ENCODE measurements at regions of chr18 and their contacts with region 1.

Region 1: DNA sequence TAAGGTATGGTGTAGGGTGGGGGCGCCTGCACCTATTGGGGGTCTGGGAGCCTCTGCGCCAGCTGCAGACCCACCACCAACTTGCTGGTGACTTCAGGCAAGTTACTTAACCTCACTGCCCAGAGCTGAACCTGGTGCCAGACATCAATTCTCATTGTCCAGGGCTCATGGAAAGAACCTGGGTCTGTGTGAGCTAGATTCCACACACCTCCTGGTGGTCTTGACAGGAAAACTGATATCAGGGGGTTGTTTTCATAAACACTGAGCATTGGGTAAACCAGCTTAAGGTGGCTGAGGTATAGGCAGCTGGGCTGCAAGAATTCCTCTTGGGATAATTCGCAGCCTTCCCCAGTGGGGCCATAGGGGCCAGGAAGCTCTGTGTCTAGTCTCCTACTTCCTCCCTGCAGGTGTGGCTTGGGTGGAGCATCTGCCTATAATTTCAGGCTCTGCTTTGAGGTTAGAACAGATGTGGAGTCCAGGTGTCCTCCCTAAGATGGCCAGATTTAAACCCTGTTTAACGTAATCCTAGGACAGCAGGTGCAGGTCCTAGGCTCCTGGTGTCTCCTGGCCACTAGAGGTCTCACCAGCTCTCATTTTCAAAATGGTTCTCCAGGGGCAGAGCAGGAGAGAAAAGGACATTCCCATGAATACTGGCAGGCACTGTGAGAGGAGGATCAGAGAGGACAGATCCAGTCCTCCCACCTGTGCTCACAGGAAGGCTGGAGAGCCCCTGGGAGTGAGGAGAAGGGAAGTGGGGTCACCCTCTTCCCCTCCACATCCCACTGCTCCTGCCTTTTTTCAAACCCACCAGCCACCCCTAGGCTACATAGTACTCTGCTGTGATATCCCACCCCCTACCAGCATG is 100.4 kb upstream of the SMAD2 start:
- DNase-seq: peak; percentile 84
- H3K4me3 ChIP-seq: peak overlapping the region in 1 of 2 experiments; percentile 27; a peak in 1 of 4 replicates
- H3K27ac ChIP-seq: peak overlapping the region in 1 of 2 experiments; percentile 89; a peak in 2 of 4 replicates
- H3K4me1 ChIP-seq: peaks cover 0 to 56% of the 10 kb centered on the region in 2 experiments; a peak in 1 of 4 replicates
- H3K27me3 ChIP-seq: no peaks in the 10 kb centered on the region
- CTCF ChIP-seq: peak; percentile 79
- EP300 ChIP-seq: peak in 1 of 2 experiments; percentile 43; a peak in 1 of 4 replicates
- RAD21 ChIP-seq: peak; percentile 97

Region 2: GRCh38 chr18:48046843-48047242 is 16.0 kb after region 1 on chr18:
- CTCF ChIA-PET with region 1: interaction called, 14 read pairs
- POLR2A ChIA-PET with region 1: no interaction called
- DNase-seq: no peak
- H3K4me3 ChIP-seq: no peak overlapping the region
- H3K27ac ChIP-seq: no peak overlapping the region; a peak in 1 of 4 replicates
- H3K4me1 ChIP-seq: peaks cover 0 to 35% of the 10 kb centered on the region in 2 experiments; a peak in 2 of 4 replicates
- H3K27me3 ChIP-seq: no peaks in the 10 kb centered on the region
- CTCF ChIP-seq: no peak
- EP300 ChIP-seq: no peak
- RAD21 ChIP-seq: no peak

Region 3: DNA sequence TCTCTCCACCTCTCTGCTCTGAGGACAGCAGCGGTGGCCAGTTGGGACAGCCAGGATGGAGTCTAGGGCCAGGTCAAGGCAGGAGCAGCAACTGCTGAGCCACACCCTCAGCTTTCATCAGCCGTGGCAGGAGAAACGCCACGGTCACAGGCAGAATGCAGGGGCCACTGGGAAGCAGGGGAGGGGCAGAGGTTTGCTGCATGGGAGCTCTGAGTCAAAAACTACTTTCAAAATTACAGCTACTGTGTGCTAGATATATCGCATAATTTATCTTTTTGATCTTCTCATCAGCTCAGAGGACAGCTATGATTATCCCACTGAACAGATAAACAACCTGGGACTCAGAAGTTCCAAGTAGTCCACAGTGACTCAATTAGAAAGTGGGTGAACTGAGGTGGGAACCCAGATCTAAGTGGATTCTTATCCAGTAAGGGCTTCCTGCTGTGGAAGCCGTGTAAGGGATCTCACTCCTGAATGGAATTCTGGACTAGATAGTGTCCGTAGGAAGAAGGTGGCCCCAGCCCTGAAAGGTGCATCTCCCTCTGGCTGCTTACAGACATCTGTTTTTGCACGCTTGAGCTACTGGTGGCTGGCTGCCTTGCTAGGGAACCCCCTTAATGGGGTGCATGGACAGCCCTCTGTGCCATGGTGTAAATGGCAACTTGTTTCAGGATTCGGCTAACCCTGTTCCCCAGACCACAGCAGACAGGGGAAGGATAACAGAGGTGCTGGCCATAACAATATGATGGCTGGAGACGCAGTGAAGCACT is 94.2 kb after region 1 on chr18:
- CTCF ChIA-PET with region 1: interaction called, 17 read pairs
- POLR2A ChIA-PET with region 1: no interaction called
- DNase-seq: no peak
- H3K4me3 ChIP-seq: no peak overlapping the region
- H3K27ac ChIP-seq: peak overlapping the region in 1 of 2 experiments; percentile 72; a peak in 1 of 4 replicates
- H3K4me1 ChIP-seq: peaks cover 0 to 64% of the 10 kb centered on the region in 2 experiments; a peak in 2 of 4 replicates
- H3K27me3 ChIP-seq: no peaks in the 10 kb centered on the region
- CTCF ChIP-seq: no peak
- EP300 ChIP-seq: no peak
- RAD21 ChIP-seq: no peak

Region 4: DNA sequence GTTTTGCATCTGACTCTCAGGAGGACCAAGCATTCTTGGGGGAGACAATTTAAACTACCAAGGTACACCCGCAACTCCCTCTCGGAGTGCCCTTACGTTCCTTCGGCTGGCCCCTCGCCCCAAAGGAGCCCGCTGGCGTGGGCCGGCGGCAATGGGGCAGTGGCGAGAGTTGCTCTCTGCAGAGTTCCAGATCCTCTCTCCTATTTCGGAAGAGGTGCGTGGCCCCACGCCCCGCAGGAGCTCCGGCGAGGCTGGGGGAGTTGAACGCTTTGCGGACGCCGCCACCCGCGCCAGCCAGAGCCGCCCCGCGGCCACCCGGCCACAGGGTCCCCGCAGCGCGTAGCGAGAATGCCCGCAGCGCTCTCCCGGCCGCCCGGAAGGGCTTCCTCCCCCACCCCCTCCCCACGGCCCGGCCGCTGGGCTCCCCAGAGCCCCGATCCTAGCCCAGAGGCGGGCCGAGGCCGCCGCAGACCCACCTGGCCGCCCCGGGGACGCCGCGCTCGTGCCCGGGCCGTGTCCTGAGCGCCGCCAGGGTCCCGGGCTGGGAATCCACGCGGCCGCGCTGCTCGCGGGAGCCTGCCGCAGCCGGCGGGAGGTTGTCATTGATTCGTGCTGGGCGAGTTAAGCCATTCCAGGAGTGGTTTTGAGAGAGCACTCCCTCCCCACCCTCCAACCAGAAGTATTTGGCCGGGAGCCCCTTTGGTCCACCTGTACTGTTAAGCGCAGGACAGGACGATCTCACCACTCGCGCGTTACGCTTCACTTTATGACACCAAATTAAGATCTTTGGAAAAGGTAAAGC is 105.9 kb after region 1 on chr18:
- CTCF ChIA-PET with region 1: interaction called, 9 read pairs
- POLR2A ChIA-PET with region 1: interaction called, 17 read pairs
- DNase-seq: peak; percentile 86
- H3K4me3 ChIP-seq: peak overlapping the region; percentile 41 to 47; a peak in 3 of 4 replicates
- H3K27ac ChIP-seq: peak overlapping the region in 1 of 2 experiments; percentile 86; a peak in 2 of 4 replicates
- H3K4me1 ChIP-seq: peaks cover 0 to 72% of the 10 kb centered on the region in 2 experiments; a peak in 2 of 4 replicates
- H3K27me3 ChIP-seq: peaks cover 54% of the 10 kb centered on the region
- CTCF ChIP-seq: no peak
- EP300 ChIP-seq: no peak
- RAD21 ChIP-seq: no peak

Region 5: DNA sequence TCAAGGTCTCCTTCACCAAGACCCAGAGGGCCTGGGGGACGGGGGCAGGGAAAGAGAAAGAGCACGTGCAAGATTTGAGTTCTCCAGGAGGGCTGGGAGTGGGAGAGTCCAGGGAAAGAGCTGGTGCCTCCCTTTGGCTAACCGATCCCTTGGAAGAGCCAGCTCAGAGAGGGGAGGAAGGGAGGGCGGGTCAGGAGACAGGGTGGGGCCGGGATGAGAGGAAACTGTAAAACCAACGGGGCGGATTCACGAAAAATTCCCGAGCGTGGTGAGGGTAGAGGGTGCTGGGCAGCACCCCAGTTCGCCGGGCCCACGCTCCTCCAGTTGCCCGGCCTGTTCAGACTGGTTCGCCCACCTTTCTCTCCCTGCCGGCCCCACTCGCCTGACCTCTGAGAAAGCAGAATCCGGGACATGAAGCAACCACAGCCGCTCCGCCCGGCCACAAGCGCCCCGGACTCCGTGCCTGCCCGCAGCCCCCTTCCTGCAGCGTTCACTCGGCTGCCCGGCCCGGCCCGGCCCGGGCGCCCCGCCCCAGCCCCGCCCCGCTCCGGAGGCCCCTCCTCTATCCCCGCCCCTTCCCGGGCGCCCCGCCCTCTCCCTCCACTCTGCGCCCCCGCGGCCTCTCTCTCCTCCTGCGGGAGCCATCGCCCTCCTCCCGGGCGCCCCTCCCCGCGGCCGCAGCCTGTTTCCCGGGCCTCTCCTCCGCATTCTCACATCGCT is 130.5 kb after region 1 on chr18:
- CTCF ChIA-PET with region 1: interaction called, 8 read pairs
- POLR2A ChIA-PET with region 1: interaction called, 28 read pairs
- DNase-seq: peak; percentile 97
- H3K4me3 ChIP-seq: peak overlapping the region; percentile 64 to 71
- H3K27ac ChIP-seq: peak overlapping the region in 1 of 2 experiments; percentile 92; a peak in 2 of 4 replicates
- H3K4me1 ChIP-seq: peaks cover 0 to 73% of the 10 kb centered on the region in 2 experiments; a peak in 2 of 4 replicates
- H3K27me3 ChIP-seq: peaks cover 10% of the 10 kb centered on the region; the same call in 1 of the 2 replicates
- CTCF ChIP-seq: no peak
- EP300 ChIP-seq: no peak
- RAD21 ChIP-seq: no peak

Region 6: GRCh38 chr18:48186061-48186798 is 155.4 kb after region 1 on chr18:
- CTCF ChIA-PET with region 1: interaction called, 20 read pairs
- POLR2A ChIA-PET with region 1: interaction called, 14 read pairs
- DNase-seq: peak; percentile 67
- H3K4me3 ChIP-seq: no peak overlapping the region; a peak in 1 of 4 replicates
- H3K27ac ChIP-seq: peak overlapping the region in 1 of 2 experiments; percentile 81; a peak in 2 of 4 replicates
- H3K4me1 ChIP-seq: peaks cover 0 to 47% of the 10 kb centered on the region in 2 experiments; a peak in 2 of 4 replicates
- H3K27me3 ChIP-seq: peaks cover 12% of the 10 kb centered on the region; the same call in 1 of the 2 replicates
- CTCF ChIP-seq: no peak
- EP300 ChIP-seq: no peak
- RAD21 ChIP-seq: no peak

Region 7: DNA sequence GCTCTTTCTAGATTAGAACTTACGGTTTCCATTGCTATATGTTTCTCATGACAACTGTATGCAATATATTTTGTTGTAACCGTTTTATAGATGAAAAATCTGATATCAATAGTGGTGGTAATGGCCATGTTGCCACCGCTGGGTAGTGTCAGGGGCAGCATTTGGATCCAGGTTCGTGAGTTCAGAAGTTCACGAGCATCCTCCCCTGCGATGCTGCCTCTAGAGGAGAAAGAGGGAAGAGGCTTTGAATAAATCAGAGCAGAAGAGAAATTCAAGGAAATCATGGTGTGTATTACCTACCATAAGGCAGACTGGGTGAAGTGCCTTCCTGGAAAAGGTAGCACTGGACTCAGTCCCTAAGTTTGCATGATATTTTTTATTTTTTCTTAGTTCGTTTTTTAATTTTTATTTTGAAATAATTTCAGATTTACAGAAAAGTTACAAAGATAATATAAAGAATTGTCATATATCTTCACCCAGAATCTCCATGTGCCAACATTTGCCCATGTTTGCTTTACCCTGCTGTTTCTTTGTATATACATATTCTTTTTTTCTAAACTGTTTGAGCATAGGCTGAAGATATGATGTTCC is 381.6 kb after region 1 on chr18:
- CTCF ChIA-PET with region 1: interaction called, 12 read pairs
- POLR2A ChIA-PET with region 1: no interaction called
- DNase-seq: peak; percentile 66
- H3K4me3 ChIP-seq: no peak overlapping the region; a peak in 1 of 4 replicates
- H3K27ac ChIP-seq: no peak overlapping the region
- H3K4me1 ChIP-seq: peaks cover 0 to 16% of the 10 kb centered on the region in 2 experiments; a peak in 1 of 4 replicates
- H3K27me3 ChIP-seq: peaks cover 48% of the 10 kb centered on the region
- CTCF ChIP-seq: peak; percentile 79
- EP300 ChIP-seq: no peak
- RAD21 ChIP-seq: peak; percentile 64

Measured in SK-N-SH (cell line).